ENCODE measurements at regions of chr12 and their contacts with region 1.

Region 1: DNA sequence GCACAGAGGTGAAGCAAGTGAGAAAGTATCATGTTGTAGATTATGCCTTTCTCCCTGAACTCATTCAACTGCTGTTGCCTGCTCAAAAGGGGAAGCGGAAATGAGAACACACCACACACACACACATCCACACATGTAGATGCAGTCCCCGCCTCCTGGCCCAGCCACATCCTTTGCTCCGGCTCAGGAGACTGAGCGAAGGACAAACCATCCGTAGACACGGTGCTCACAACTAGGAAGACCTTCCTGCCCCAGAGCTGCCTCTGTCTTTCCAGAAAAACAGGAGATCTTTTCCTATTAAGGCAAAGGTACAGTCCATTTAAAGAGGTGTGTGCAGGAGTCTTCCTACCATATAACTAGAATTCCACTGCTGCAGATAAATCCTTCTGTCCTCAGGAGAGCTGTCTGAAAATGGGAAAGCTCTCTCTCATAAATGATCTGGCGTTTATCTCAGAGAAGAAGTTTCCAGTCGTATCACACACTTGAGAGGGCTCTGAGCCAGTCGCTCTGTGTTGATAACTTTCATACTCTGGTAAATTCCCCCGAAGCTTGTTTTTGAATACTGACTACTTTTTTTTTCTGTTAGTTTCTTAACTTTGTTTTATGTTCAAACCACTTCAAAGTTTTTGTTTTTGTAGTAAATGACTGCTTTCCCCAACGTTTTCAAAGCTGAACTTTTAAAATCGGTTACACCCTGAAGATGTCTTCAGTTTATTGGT is at the start of gene TESPA1:
- DNase-seq: peak; percentile 94
- ATAC-seq: peak; percentile 88
- H3K4me3 Mint-ChIP-seq: peak within 1 kb of the TSS; percentile 85
- H3K27ac Mint-ChIP-seq: peak within 1 kb of the TSS; percentile 94
- H3K4me1 Mint-ChIP-seq: peaks cover 53% of the 10 kb centered on the region
- H3K27me3 Mint-ChIP-seq: no peaks in the 10 kb centered on the region
- CTCF ChIP-seq: no peak
- total RNA-seq, gene TESPA1: 107 to 112 TPM

Region 2: GRCh38 chr12:54935235-54935951 is 49.4 kb before region 1 on chr12:
- CTCF ChIA-PET with region 1: interaction called, 3 read pairs
- POLR2A ChIA-PET with region 1: interaction called, 4 read pairs
- intact Hi-C with region 1: loop called (anchors 10 kb)
- DNase-seq: peak; percentile 71
- ATAC-seq: peak; percentile 85
- H3K4me3 Mint-ChIP-seq: peak overlapping the region; percentile 26
- H3K27ac Mint-ChIP-seq: peak overlapping the region; percentile 99
- H3K4me1 Mint-ChIP-seq: peaks cover 61% of the 10 kb centered on the region
- H3K27me3 Mint-ChIP-seq: no peaks in the 10 kb centered on the region
- CTCF ChIP-seq: no peak

Region 3: GRCh38 chr12:55420307-55420962 is 435.6 kb after region 1 on chr12:
- CTCF ChIA-PET with region 1: no interaction called
- POLR2A ChIA-PET with region 1: no interaction called
- intact Hi-C with region 1: no loop called
- DNase-seq: no peak
- ATAC-seq: no peak
- H3K4me3 Mint-ChIP-seq: no peak overlapping the region
- H3K27ac Mint-ChIP-seq: no peak overlapping the region
- H3K4me1 Mint-ChIP-seq: no peaks in the 10 kb centered on the region
- H3K27me3 Mint-ChIP-seq: peaks cover 40% of the 10 kb centered on the region
- CTCF ChIP-seq: no peak